ENCODE measurements at regions of chr3 and their contacts with region 1.

Region 1: DNA sequence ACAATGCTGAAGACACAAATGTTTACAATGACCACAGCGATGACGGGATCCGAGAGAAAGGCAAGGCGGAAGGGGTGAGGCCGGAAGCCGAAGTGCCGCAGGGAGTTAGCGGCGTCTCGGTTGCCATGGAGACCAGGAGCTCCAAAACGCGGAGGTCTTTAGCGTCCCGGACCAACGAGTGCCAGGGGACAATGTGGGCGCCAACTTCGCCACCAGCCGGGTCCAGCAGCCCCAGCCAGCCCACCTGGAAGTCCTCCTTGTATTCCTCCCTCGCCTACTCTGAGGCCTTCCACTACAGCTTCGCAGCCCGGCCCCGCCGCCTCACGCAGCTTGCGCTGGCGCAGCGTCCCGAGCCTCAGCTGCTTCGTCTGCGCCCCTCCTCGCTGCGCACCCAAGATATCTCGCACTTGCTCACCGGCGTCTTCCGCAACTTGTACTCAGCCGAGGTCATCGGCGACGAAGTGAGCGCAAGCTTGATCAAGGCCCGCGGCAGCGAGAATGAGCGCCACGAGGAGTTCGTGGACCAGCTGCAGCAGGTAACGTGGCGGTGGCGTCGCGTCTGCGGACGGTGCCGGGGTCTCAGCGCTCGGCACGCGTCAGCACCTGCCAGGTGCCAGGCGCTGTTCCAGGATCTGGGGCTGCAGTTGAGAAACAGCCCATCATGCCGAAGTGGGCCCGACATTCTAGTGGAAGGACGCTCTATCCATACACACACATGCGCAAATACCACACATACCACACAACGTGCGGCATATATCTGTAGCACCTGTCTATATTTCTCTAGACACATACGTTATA is at the start of gene DLEC1:
- DNase-seq: peak; percentile 86
- ATAC-seq: peak; percentile 65
- H3K4me3 ChIP-seq: peak within 1 kb of the TSS; percentile 64 to 71 (median 69)
- H3K4me3 Mint-ChIP-seq: peak within 1 kb of the TSS; percentile 93
- H3K27ac ChIP-seq: peak within 1 kb of the TSS; percentile 18 to 46
- H3K27ac Mint-ChIP-seq: peak within 1 kb of the TSS; percentile 54
- H3K4me1 ChIP-seq: peaks cover 12 to 22% of the 10 kb centered on the region in 2 donors
- H3K4me1 Mint-ChIP-seq: peaks cover 19% of the 10 kb centered on the region
- H3K27me3 ChIP-seq: peaks cover 0 to 4% (median 1%) of the 10 kb centered on the region in 4 experiments
- H3K27me3 Mint-ChIP-seq: peaks cover 9% of the 10 kb centered on the region
- CTCF ChIP-seq: no peak
- total RNA-seq, gene DLEC1: 0.83 and 2.1 TPM in 2 replicates

Region 2: DNA sequence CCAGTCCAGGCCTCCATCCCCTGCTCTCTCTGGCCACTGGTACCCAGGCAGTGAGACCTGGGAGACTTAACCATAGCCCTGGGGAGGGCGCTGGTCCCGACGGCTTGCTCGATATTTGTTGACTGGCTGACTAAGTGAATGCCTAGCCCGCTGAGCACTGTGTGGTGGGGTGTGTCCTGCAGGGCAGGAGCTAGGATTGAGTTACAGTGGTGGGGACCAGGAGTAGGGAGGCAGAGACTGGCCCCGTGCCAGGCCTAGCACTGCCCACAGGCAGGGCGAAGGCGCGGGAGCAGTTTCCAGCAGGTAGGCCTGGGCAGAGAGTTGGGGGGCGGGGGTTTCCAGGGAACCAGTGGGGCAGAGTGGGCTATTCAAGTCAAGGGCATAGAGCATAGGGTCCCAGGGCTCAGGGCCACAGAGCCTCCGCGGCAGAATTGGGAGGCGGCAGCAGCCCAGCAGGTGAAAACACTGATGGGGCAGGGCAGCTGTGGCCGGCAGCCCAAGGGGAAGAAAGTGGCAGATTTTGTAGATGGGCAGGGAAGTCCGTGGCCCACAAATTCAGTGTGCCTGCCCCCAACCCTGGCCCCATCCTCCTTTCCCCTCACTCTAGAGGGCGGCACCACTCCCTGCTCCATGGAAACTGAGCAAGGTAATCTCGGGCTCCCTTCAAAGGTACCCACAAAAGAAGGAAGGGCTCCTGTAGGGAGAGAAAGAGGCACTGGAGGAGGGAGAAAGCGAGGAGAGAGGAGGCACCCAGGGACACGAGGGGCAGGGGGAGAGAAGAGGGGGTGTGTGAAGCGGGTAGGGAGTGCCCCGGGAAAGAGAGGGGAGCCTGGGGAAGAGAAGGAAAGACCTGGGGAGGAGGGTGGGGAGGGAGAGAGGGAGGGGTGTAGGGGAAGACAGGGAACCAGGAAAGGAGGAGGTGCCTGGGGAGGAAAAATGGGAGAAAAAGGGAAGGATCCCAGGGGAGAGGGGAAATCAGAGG is 48.5 kb before region 1 on chr3 and contains the start of gene VILL:
- CTCF ChIA-PET with region 1: no interaction called
- POLR2A ChIA-PET with region 1: no interaction called
- intact Hi-C with region 1: no loop called
- DNase-seq: no peak
- ATAC-seq: no peak
- H3K4me3 ChIP-seq: no peak within 1 kb of the TSS
- H3K4me3 Mint-ChIP-seq: no peak within 1 kb of the TSS
- H3K27ac ChIP-seq: no peak within 1 kb of the TSS
- H3K27ac Mint-ChIP-seq: no peak within 1 kb of the TSS
- H3K4me1 ChIP-seq: peaks cover 16 to 20% of the 10 kb centered on the region in 2 donors
- H3K4me1 Mint-ChIP-seq: peaks cover 26% of the 10 kb centered on the region
- H3K27me3 ChIP-seq: no peaks in the 10 kb centered on the region
- H3K27me3 Mint-ChIP-seq: no peaks in the 10 kb centered on the region
- CTCF ChIP-seq: no peak
- total RNA-seq, gene VILL: 32.9 and 35.2 TPM in 2 replicates

Region 3: DNA sequence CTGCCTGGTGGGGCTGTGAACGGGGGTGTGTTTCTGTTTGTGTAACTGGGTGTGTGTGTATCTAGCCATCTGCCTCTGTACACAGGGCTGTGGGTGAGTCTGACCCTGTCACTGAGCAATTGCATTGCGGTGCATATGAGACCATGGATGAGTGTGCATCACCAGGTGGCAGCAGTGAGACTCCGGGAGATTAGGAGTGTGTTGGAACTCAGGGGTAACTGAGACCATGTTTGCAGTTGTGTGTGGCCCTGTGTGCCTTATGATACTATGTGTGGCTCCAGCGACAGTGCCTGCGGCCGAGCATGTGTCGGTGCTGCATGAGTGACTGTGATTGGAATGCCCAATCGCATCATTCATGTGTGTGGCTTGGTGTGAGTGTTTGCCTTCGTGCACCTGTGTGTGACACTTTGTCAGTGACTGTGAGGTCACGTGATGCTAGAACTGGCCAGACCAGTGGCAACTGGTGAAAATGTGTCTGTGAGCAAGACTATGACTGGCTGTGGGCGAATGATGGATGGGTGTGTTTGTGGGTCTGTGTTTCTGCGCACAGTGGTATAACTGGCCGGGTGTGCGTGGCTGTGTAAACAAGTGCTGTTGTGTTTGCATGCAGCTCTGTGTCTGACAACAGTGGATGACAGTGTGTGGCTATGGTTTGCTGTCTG is 34.8 kb before region 1 on chr3:
- CTCF ChIA-PET with region 1: interaction called, 16 read pairs
- POLR2A ChIA-PET with region 1: no interaction called
- intact Hi-C with region 1: loop called (anchors 1 kb)
- DNase-seq: peak; percentile 55
- ATAC-seq: peak; percentile 47
- H3K4me3 ChIP-seq: no peak overlapping the region
- H3K4me3 Mint-ChIP-seq: no peak overlapping the region
- H3K27ac ChIP-seq: no peak overlapping the region
- H3K27ac Mint-ChIP-seq: peak overlapping the region; percentile 29
- H3K4me1 ChIP-seq: peaks cover 0 to under 1% of the 10 kb centered on the region in 2 donors
- H3K4me1 Mint-ChIP-seq: peaks cover 12% of the 10 kb centered on the region
- H3K27me3 ChIP-seq: no peaks in the 10 kb centered on the region
- H3K27me3 Mint-ChIP-seq: no peaks in the 10 kb centered on the region
- CTCF ChIP-seq: peak; percentile 50

Region 4: GRCh38 chr3:38130631-38131065 is 91.3 kb after region 1 on chr3:
- CTCF ChIA-PET with region 1: no interaction called
- POLR2A ChIA-PET with region 1: no interaction called
- intact Hi-C with region 1: no loop called
- DNase-seq: no peak
- ATAC-seq: no peak
- H3K4me3 ChIP-seq: no peak overlapping the region
- H3K4me3 Mint-ChIP-seq: no peak overlapping the region
- H3K27ac ChIP-seq: no peak overlapping the region
- H3K27ac Mint-ChIP-seq: no peak overlapping the region
- H3K4me1 ChIP-seq: peaks cover 7 to 14% of the 10 kb centered on the region in 2 donors
- H3K4me1 Mint-ChIP-seq: peaks cover 21% of the 10 kb centered on the region
- H3K27me3 ChIP-seq: no peaks in the 10 kb centered on the region
- H3K27me3 Mint-ChIP-seq: no peaks in the 10 kb centered on the region
- CTCF ChIP-seq: no peak

Measured in B cell (primary cell).